PC-9 (cell line): ENCODE measurements at regions of chr11 and their contacts with region 1.

Region 1: GRCh38 chr11:64652586-64653387 is 61.8 kb downstream of the SLC22A12 start:
- DNase-seq: peak; percentile 46 to 88
- H3K4me3 ChIP-seq: no peak overlapping the region
- H3K27ac ChIP-seq: no peak overlapping the region
- H3K4me1 ChIP-seq: peaks cover 17% of the 10 kb centered on the region
- H3K27me3 ChIP-seq: no peaks in the 10 kb centered on the region
- CTCF ChIP-seq: peak; percentile 97

Region 2: GRCh38 chr11:64448599-64449556 is 203.9 kb before region 1 on chr11:
- CTCF ChIA-PET with region 1: interaction called, 9 read pairs
- POLR2A ChIA-PET with region 1: no interaction called
- intact Hi-C with region 1: loop called (anchors 2 kb)
- DNase-seq: peak; percentile 60 to 89
- H3K4me3 ChIP-seq: peak overlapping the region; percentile 40; the same call in 1 of the 2 replicates
- H3K27ac ChIP-seq: no peak overlapping the region
- H3K4me1 ChIP-seq: peaks cover 16% of the 10 kb centered on the region
- H3K27me3 ChIP-seq: peaks cover 30% of the 10 kb centered on the region
- CTCF ChIP-seq: peak; percentile 92

Region 3: DNA sequence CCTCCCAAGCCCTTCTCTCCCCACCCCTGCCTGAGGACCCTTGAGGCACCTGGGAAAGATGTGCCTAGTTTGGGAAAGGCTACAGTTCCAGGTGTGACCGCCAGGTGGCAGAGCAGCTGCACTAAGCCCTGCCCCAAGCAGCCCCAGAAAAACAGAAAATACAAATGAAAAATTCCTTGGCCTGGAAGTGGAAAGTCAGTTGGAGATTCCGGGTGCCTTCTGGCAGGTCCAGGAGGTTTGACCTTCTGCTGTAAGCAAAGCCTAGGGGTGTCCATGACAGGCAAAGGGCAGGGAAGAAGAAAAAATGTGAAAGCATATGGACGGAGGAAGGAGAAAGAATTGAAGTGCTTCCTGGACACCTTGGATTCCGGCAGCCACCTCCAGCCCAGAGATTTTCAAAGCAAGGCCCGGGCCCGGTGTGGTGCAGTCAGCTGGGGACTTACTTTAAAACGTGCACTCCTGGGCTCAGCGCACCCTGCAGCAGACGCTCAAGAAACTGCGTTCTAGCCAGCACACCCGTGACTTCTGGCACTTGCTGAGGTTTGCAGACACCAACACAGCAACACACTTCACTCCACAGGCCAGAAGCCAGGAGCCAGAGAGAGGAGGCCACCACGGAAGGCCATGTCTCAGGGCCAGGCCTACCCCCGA is 99.1 kb before region 1 on chr11:
- CTCF ChIA-PET with region 1: no interaction called
- POLR2A ChIA-PET with region 1: no interaction called
- intact Hi-C with region 1: loop called (anchors 1 kb)
- DNase-seq: peak in 1 of 2 experiments; percentile 58
- H3K4me3 ChIP-seq: no peak overlapping the region
- H3K27ac ChIP-seq: no peak overlapping the region
- H3K4me1 ChIP-seq: peaks cover 10% of the 10 kb centered on the region; the same call in 1 of the 2 replicates
- H3K27me3 ChIP-seq: no peaks in the 10 kb centered on the region
- CTCF ChIP-seq: peak; percentile 100

Region 4: GRCh38 chr11:64566042-64566914 is 86.5 kb before region 1 on chr11:
- CTCF ChIA-PET with region 1: no interaction called
- POLR2A ChIA-PET with region 1: no interaction called
- intact Hi-C with region 1: no loop called
- DNase-seq: peak; percentile 82 to 89
- H3K4me3 ChIP-seq: peak overlapping the region; percentile 46
- H3K27ac ChIP-seq: peak overlapping the region; percentile 45; the same call in 1 of the 2 replicates
- H3K4me1 ChIP-seq: peaks cover 11% of the 10 kb centered on the region
- H3K27me3 ChIP-seq: no peaks in the 10 kb centered on the region
- CTCF ChIP-seq: no peak

Region 5: GRCh38 chr11:64742889-64743590 is 90.3 kb after region 1 on chr11:
- CTCF ChIA-PET with region 1: no interaction called
- POLR2A ChIA-PET with region 1: no interaction called
- intact Hi-C with region 1: loop called (anchors 5 kb)
- DNase-seq: peak in 1 of 2 experiments; percentile 83
- H3K4me3 ChIP-seq: peak overlapping the region; percentile 64
- H3K27ac ChIP-seq: no peak overlapping the region
- H3K4me1 ChIP-seq: peaks cover 13% of the 10 kb centered on the region
- H3K27me3 ChIP-seq: peaks cover 51% of the 10 kb centered on the region
- CTCF ChIP-seq: peak; percentile 93

Region 6: GRCh38 chr11:64969209-64969608 is 316.4 kb after region 1 on chr11:
- CTCF ChIA-PET with region 1: no interaction called
- POLR2A ChIA-PET with region 1: no interaction called
- intact Hi-C with region 1: no loop called
- DNase-seq: peak; percentile 19 to 98
- H3K4me3 ChIP-seq: no peak overlapping the region
- H3K27ac ChIP-seq: peak overlapping the region; percentile 95
- H3K4me1 ChIP-seq: peaks cover 26% of the 10 kb centered on the region
- H3K27me3 ChIP-seq: no peaks in the 10 kb centered on the region
- CTCF ChIP-seq: no peak